ENCODE measurements at regions of chr17 and their contacts with region 1.

Region 1: DNA sequence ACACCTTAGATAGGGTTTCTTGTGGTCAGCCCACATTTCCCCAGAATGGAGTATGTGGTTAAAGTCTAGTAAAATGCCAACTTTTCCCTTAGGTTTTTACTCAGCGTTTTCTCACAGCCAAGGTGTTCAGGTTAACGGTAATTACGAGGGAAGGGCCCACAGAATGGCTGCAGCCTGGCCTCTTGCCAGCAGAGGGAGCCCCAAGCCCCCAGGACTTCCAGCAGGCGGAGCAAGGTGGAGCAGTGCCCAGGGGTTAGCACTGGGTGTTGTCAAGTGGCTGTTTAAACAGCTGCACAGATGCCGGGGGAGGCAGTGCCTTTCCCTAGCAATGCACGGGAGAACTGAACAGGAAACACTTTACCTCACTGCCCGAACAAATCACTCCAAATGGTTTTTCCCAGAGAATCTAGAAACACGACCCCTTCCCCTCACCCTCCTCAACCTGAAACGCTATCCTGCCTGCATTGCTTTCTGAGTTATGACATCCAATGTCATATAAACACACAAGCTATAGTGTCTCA is 6.6 kb downstream of the PHB1 start:
- DNase-seq: peak; percentile 92
- ATAC-seq: peak; percentile 98
- H3K4me3 Mint-ChIP-seq: no peak overlapping the region
- H3K27ac Mint-ChIP-seq: peak overlapping the region; percentile 65
- H3K4me1 Mint-ChIP-seq: peaks cover 49% of the 10 kb centered on the region
- H3K27me3 Mint-ChIP-seq: no peaks in the 10 kb centered on the region
- CTCF ChIP-seq: peak; percentile 98

Region 2: GRCh38 chr17:49297141-49297540 is 110.9 kb before region 1 on chr17:
- CTCF ChIA-PET with region 1: interaction called, 11 read pairs
- POLR2A ChIA-PET with region 1: no interaction called
- intact Hi-C with region 1: no loop called
- DNase-seq: no peak
- ATAC-seq: no peak
- H3K4me3 Mint-ChIP-seq: no peak overlapping the region
- H3K27ac Mint-ChIP-seq: no peak overlapping the region
- H3K4me1 Mint-ChIP-seq: peaks cover 6% of the 10 kb centered on the region
- H3K27me3 Mint-ChIP-seq: no peaks in the 10 kb centered on the region
- CTCF ChIP-seq: no peak

Region 3: GRCh38 chr17:49361902-49362722 is 45.9 kb before region 1 on chr17 and contains the start of gene ZNF652:
- CTCF ChIA-PET with region 1: interaction called, 11 read pairs
- POLR2A ChIA-PET with region 1: no interaction called
- intact Hi-C with region 1: no loop called
- DNase-seq: peak; percentile 88
- ATAC-seq: peak; percentile 57
- H3K4me3 Mint-ChIP-seq: peak within 1 kb of the TSS; percentile 90
- H3K27ac Mint-ChIP-seq: peak within 1 kb of the TSS; percentile 93
- H3K4me1 Mint-ChIP-seq: peaks cover 58% of the 10 kb centered on the region
- H3K27me3 Mint-ChIP-seq: no peaks in the 10 kb centered on the region
- CTCF ChIP-seq: no peak
- total RNA-seq, gene ZNF652: 6.4 to 6.7 TPM

Region 4: DNA sequence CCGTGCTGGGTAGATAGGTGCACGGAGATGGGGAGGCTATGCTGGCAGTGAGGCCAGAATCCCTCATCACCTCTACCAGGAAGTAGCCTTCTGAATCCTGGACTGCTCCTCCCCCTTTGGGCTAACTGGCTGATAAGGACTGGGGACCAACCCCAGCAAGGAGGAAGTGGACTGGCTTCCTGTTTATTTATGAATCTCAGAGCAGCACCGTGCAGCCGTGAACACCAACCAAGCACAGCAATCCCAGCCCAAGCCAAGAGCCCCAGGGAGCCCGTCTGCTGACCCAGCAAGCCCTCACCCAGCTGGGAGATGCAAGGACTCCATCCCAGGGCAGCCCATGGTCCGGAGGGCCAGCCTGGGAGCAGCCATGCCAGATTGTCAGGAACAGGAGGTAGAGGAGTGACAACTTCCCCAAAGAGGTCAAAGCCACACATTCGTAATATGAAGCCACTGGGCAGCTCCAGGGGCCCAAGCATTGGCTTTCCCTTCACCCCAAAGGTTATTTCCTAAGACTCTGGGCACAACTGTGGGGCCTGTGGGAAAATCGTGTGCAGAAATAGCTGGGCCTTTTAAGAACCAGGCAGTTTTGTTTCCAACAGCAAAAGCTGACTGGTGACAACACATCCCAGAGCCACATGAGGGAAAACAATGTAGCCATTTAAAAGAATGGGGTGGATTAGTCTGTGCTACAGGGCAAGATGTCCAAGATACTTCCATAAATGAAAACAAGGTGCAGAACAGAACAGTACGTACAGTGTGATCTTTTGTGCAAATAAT is 17.3 kb before region 1 on chr17:
- CTCF ChIA-PET with region 1: interaction called, 21 read pairs
- POLR2A ChIA-PET with region 1: interaction called, 3 read pairs
- intact Hi-C with region 1: no loop called
- DNase-seq: peak; percentile 15
- ATAC-seq: no peak
- H3K4me3 Mint-ChIP-seq: no peak overlapping the region
- H3K27ac Mint-ChIP-seq: peak overlapping the region; percentile 87
- H3K4me1 Mint-ChIP-seq: peaks cover 56% of the 10 kb centered on the region
- H3K27me3 Mint-ChIP-seq: no peaks in the 10 kb centered on the region
- CTCF ChIP-seq: no peak

Region 5: GRCh38 chr17:49434821-49435670 is 27.0 kb after region 1 on chr17:
- CTCF ChIA-PET with region 1: interaction called, 19 read pairs
- POLR2A ChIA-PET with region 1: no interaction called
- intact Hi-C with region 1: no loop called
- DNase-seq: peak; percentile 64
- ATAC-seq: peak; percentile 53
- H3K4me3 Mint-ChIP-seq: no peak overlapping the region
- H3K27ac Mint-ChIP-seq: no peak overlapping the region
- H3K4me1 Mint-ChIP-seq: no peaks in the 10 kb centered on the region
- H3K27me3 Mint-ChIP-seq: peaks cover 22% of the 10 kb centered on the region
- CTCF ChIP-seq: peak; percentile 95

Region 6: DNA sequence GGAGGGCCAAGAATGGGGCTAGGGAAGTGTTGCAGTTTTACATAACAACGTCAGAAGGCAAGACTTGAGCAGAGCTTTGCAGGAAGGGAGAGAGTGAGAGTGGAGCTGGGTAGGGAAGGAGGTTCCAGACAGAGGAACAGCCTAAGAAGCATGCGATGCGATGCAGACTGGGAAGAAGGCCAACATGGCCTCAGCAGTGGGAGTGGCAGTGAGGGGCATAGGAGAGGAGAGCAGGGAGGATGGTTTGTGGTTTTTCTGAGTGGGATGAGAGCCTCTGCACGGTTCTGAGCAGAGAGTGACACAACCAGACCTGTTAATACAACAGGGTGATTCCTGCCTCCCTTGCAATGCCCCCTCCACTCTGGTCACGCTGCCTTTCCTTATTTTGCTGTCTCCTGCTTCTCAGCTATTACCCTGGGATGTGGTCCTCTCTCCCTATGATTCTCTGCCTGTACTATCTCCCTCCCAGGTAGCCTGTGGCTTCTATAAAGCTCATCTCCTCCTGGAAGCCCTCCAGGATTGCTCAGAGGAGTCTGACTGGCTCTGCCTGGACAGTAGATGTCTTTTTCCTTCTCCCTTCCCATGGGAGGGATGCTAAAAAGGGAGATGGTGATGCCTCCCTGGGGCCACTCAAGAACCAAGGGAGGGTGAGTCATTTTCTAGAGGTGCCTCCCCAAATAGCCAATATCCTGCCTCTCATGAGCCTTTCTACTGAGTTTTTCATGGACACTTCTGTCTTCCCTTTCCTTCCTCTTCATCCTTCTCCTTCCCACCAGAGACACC is 48.3 kb after region 1 on chr17:
- CTCF ChIA-PET with region 1: no interaction called
- POLR2A ChIA-PET with region 1: no interaction called
- intact Hi-C with region 1: no loop called
- DNase-seq: no peak
- ATAC-seq: no peak
- H3K4me3 Mint-ChIP-seq: no peak overlapping the region
- H3K27ac Mint-ChIP-seq: no peak overlapping the region
- H3K4me1 Mint-ChIP-seq: peaks cover 2% of the 10 kb centered on the region
- H3K27me3 Mint-ChIP-seq: peaks cover 29% of the 10 kb centered on the region
- CTCF ChIP-seq: no peak